ENCODE measurements at regions of chr2 and their contacts with region 1.

Region 1: GRCh38 chr2:10122386-10123280 is at the start of gene RRM2:
- DNase-seq: peak; percentile 94
- H3K4me3 Mint-ChIP-seq: peak within 1 kb of the TSS; percentile 99
- H3K27ac Mint-ChIP-seq: peak within 1 kb of the TSS; percentile 95
- H3K4me1 Mint-ChIP-seq: peaks cover 45% of the 10 kb centered on the region
- H3K27me3 Mint-ChIP-seq: no peaks in the 10 kb centered on the region
- total RNA-seq, gene RRM2: 374 TPM in 2 replicates

Region 2: DNA sequence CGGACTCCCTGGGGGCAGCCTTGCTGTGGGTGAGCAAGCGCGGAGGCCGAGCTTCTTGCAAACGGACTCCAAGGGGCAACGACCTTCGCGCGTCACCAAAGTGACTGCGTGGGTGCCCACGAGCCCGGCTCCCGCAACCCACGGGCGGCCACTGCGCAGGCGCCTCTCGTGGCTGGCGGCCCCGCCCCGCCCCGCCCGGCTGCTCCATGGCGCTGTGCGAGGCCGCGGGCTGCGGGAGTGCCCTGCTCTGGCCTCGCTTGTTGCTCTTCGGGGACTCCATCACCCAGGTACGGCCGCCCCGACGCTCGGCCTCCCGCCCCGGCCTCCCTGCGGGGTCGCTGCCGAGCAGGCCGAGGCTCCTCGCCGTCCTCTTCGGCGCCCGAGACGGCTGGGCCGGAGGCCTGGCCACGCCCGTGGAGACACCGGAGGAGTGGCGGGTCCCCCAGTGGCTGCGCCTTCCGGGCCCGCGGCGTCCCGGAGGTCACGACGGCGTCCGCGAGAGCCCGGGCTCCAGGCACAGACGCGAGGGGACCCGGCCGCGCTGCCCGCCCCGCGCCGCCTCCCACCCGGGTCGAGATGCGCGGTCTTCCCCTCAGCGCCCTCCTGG is 648.2 kb before region 1 on chr2 and contains the start of gene IAH1:
- intact Hi-C with region 1: loop called (anchors 5 kb)
- DNase-seq: peak; percentile 61
- H3K4me3 Mint-ChIP-seq: peak within 1 kb of the TSS; percentile 74
- H3K27ac Mint-ChIP-seq: peak within 1 kb of the TSS; percentile 69
- H3K4me1 Mint-ChIP-seq: peaks cover 30% of the 10 kb centered on the region
- H3K27me3 Mint-ChIP-seq: no peaks in the 10 kb centered on the region
- total RNA-seq, gene IAH1: 82.0 and 82.4 TPM in 2 replicates

Region 3: GRCh38 chr2:9849336-9849735 is 273.3 kb before region 1 on chr2:
- intact Hi-C with region 1: no loop called
- DNase-seq: no peak
- H3K4me3 Mint-ChIP-seq: no peak overlapping the region
- H3K27ac Mint-ChIP-seq: no peak overlapping the region
- H3K4me1 Mint-ChIP-seq: peaks cover 40% of the 10 kb centered on the region
- H3K27me3 Mint-ChIP-seq: no peaks in the 10 kb centered on the region

Region 4: DNA sequence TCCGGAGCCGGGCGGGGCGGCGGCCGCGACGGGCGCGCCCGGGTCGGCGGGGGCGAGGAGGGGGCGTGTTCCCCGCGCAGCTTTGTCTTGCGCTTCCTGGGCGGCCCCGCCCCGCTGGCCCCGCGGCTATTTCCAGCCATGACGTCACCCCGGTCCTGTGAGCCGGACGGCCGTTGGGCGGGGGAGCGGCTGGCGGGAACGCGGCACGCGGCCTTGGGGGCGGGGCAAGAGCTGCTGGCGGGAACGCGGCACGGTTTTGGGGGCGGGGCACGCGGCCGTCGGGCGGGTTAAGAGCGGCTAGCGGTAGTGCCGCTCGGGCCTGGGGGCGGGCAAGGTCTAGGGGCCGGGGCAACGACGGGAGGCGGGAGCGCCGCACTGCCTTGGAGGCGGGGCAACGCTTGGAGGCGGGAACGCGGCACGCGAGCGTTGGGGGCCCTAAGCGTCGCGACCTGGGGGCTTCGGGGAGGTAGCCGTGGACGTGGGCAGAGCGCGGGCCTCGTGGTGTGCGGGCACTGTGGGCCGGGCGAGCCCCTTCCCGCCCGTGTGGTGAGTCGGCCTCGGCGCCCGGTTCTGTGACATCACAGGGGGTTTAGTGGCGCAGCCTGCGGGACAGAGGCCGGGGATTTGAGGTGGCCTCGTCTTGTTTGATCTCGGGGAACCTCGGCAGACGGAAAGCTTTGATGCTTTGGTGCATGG is 78.6 kb before region 1 on chr2:
- intact Hi-C with region 1: loop called (anchors 1 kb)
- DNase-seq: peak; percentile 88
- H3K4me3 Mint-ChIP-seq: peak overlapping the region; percentile 71
- H3K27ac Mint-ChIP-seq: peak overlapping the region; percentile 60
- H3K4me1 Mint-ChIP-seq: peaks cover 16% of the 10 kb centered on the region
- H3K27me3 Mint-ChIP-seq: peaks cover 16% of the 10 kb centered on the region

Region 5: GRCh38 chr2:10302479-10303180 is 180.0 kb after region 1 on chr2 and contains the start of gene HPCAL1:
- intact Hi-C with region 1: loop called (anchors 2 kb)
- DNase-seq: peak; percentile 80
- H3K4me3 Mint-ChIP-seq: peak within 1 kb of the TSS; percentile 98
- H3K27ac Mint-ChIP-seq: peak within 1 kb of the TSS; percentile 89
- H3K4me1 Mint-ChIP-seq: peaks cover 69% of the 10 kb centered on the region
- H3K27me3 Mint-ChIP-seq: no peaks in the 10 kb centered on the region
- total RNA-seq, gene HPCAL1: 102 and 110 TPM in 2 replicates

Region 6: GRCh38 chr2:10434886-10435819 is 312.5 kb after region 1 on chr2:
- intact Hi-C with region 1: loop called (anchors 1 kb)
- DNase-seq: peak; percentile 65
- H3K4me3 Mint-ChIP-seq: no peak overlapping the region
- H3K27ac Mint-ChIP-seq: no peak overlapping the region
- H3K4me1 Mint-ChIP-seq: peaks cover 10% of the 10 kb centered on the region
- H3K27me3 Mint-ChIP-seq: no peaks in the 10 kb centered on the region

Region 7: GRCh38 chr2:10668402-10669012 is 545.9 kb after region 1 on chr2:
- intact Hi-C with region 1: loop called (anchors 5 kb)
- DNase-seq: no peak
- H3K4me3 Mint-ChIP-seq: no peak overlapping the region
- H3K27ac Mint-ChIP-seq: no peak overlapping the region
- H3K4me1 Mint-ChIP-seq: peaks cover 2% of the 10 kb centered on the region
- H3K27me3 Mint-ChIP-seq: no peaks in the 10 kb centered on the region